ENCODE measurements at regions of chr1 and their contacts with region 1.

Region 1: GRCh38 chr1:23092447-23092846 is 73.2 kb downstream of the KDM1A start:
- DNase-seq: no peak
- H3K4me3 ChIP-seq: no peak overlapping the region
- H3K27ac ChIP-seq: no peak overlapping the region
- H3K4me1 ChIP-seq: peaks cover 13% of the 10 kb centered on the region
- H3K27me3 ChIP-seq: no peaks in the 10 kb centered on the region
- CTCF ChIP-seq: no peak

Region 2: DNA sequence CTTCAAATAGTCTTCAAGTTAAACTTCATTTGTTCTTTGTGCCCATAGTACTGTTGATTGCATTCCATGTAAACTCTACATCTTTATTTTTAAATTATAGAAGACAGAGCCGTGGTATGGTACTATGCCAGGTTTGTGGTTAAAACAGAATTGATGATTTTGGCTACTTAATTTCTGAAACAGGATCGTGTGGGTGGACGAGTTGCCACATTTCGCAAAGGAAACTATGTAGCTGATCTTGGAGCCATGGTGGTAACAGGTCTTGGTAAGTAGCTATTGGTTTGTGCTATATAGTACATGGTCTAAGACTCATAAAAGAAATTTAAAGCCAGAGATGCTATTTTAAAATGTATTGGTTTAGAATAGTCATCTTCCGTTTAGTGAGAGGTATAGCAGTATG is 35.1 kb before region 1 on chr1:
- CTCF ChIA-PET with region 1: no interaction called
- dilution Hi-C with region 1: loop called (anchors 5 kb)
- in situ Hi-C with region 1: no loop called
- intact Hi-C with region 1: no loop called
- DNase-seq: no peak
- H3K4me3 ChIP-seq: no peak overlapping the region
- H3K27ac ChIP-seq: no peak overlapping the region
- H3K4me1 ChIP-seq: no peaks in the 10 kb centered on the region
- H3K27me3 ChIP-seq: no peaks in the 10 kb centered on the region
- CTCF ChIP-seq: no peak